CD14-positive monocyte (primary cell): ENCODE measurements at regions of chr2 and their contacts with region 1.

Region 1: GRCh38 chr2:181715033-181715630 is 34.8 kb upstream of the NEUROD1 start:
- DNase-seq: peak; percentile 62 to 81 (median 69)
- H3K4me3 ChIP-seq: no peak overlapping the region
- H3K4me3 Mint-ChIP-seq: no peak overlapping the region
- H3K27ac ChIP-seq: no peak overlapping the region
- H3K27ac Mint-ChIP-seq: no peak overlapping the region
- H3K4me1 ChIP-seq: no peaks in the 10 kb centered on the region
- H3K4me1 Mint-ChIP-seq: no peaks in the 10 kb centered on the region
- H3K27me3 ChIP-seq: no peaks in the 10 kb centered on the region
- H3K27me3 Mint-ChIP-seq: peaks cover 0 to 2% (median 1%) of the 10 kb centered on the region in 3 donors
- CTCF ChIP-seq: peak; percentile 83

Region 2: DNA sequence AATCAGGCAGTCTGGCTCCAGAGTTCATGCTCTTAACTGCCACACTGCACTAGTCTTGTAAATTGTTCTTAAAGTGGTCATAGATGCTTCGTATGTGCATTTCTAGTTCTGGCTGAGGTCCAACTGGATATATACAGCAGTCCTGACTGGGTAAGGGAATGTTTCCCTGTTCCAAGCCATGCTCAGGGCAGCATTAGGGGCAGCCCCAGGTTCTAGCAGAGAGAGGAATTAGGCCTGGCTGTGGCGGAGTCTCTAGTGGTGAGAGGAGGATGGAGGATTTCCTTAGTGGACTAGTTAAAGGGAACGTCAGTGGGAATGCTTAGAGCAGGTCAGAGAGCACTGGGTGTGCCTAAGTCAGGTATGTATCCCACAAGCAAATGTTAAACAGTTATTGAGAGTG is 706.7 kb before region 1 on chr2:
- intact Hi-C with region 1: no loop called
- DNase-seq: no peak
- H3K4me3 ChIP-seq: no peak overlapping the region
- H3K4me3 Mint-ChIP-seq: no peak overlapping the region
- H3K27ac ChIP-seq: no peak overlapping the region
- H3K27ac Mint-ChIP-seq: peak overlapping the region in 1 of 7 donors; percentile 45
- H3K4me1 ChIP-seq: no peaks in the 10 kb centered on the region
- H3K4me1 Mint-ChIP-seq: peaks cover 4% of the 10 kb centered on the region
- H3K27me3 ChIP-seq: no peaks in the 10 kb centered on the region
- H3K27me3 Mint-ChIP-seq: no peaks in the 10 kb centered on the region
- CTCF ChIP-seq: no peak

Region 3: DNA sequence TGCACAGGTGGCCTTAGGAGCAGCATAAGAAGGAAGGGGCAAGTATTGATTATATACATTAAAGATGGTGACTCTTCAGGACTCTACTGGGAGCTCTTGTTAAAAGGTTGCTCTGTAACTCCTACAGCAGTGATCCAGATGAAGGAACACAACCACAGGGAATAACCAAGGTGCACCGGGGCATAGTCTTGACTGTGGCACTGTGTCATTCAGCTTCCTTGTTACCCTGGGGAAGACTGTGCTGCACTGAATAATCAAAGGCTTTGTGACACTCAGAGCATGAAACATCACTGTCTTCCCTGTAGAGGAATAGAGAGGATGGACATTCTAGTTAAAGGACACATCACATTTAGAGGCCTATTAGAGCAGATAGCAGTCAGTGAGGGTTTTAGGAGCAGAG is 629.4 kb before region 1 on chr2:
- intact Hi-C with region 1: loop called in 1 of 2 experiments (anchors 10 kb)
- DNase-seq: no peak
- H3K4me3 ChIP-seq: no peak overlapping the region
- H3K4me3 Mint-ChIP-seq: no peak overlapping the region
- H3K27ac ChIP-seq: no peak overlapping the region
- H3K27ac Mint-ChIP-seq: no peak overlapping the region
- H3K4me1 ChIP-seq: no peaks in the 10 kb centered on the region
- H3K4me1 Mint-ChIP-seq: peaks cover 3% of the 10 kb centered on the region
- H3K27me3 ChIP-seq: no peaks in the 10 kb centered on the region
- H3K27me3 Mint-ChIP-seq: peaks cover 0 to 8% (median 2%) of the 10 kb centered on the region in 3 donors
- CTCF ChIP-seq: no peak

Region 4: DNA sequence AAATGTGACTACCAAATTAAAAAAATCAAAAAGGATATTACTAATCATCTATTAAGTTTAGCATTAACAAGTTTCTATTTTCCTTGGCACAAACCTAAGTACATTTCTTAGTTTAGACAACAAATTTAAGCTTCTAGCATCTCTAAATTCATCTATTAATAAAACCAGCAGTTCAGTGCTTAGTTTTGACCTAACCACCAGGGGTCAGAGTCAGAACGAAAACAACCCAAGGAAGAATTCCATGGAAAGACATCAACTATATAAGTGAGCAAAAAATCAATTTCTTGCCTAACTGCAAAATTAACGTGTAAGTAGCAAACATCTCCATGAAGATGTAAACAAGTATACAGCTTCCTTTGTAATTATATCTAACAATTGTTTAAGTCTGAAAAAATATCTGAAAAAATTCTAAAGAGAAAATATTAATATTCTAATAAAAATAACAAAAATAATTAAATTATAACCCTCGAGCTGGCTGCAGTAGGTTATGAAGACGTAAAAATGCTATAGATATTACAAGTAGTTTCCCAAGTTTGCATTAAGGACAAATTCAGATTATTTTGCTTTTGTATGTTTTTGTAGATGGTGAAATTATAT is 141.9 kb before region 1 on chr2:
- intact Hi-C with region 1: loop called (anchors 10 kb)
- DNase-seq: no peak
- H3K4me3 ChIP-seq: no peak overlapping the region
- H3K4me3 Mint-ChIP-seq: no peak overlapping the region
- H3K27ac ChIP-seq: no peak overlapping the region
- H3K27ac Mint-ChIP-seq: no peak overlapping the region
- H3K4me1 ChIP-seq: peaks cover 11 to 12% of the 10 kb centered on the region in 2 donors
- H3K4me1 Mint-ChIP-seq: peaks cover 5% of the 10 kb centered on the region
- H3K27me3 ChIP-seq: no peaks in the 10 kb centered on the region
- H3K27me3 Mint-ChIP-seq: no peaks in the 10 kb centered on the region
- CTCF ChIP-seq: peak; percentile 32